AG04450 (cell line): ENCODE measurements at regions of chr1 and their contacts with region 1.

Region 1: DNA sequence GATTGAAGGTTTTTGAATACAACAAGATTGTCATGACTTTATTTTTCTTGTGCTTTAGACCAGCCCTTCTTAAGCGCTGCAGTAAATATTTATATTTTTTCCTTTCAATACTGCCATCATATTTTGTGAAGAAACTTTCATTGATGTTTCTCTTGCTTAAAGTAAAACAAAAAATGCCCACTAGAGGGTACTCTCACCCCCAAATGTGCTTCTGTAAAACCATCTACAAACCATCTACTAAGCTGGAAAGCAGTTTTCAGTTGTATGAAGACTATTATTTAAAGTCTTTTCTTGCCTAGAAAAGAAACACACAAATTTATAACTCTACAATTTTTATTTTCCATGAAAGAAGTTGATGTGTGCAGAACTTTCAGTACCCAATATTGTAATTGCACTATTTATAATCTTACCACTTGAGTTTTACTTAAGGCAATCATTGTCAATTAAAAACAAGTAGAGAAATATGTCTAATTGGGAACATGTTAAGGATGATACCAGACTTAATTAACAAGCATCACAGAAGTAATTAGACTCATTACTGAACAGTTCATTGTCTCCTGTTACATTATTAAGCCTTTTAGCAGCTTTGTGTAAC is 10.7 kb downstream of the LEPR start:
- DNase-seq: no peak
- H3K4me3 ChIP-seq: no peak overlapping the region
- H3K27ac ChIP-seq: no peak overlapping the region
- H3K27me3 ChIP-seq: no peaks in the 10 kb centered on the region
- CTCF ChIP-seq: peak; percentile 69

Region 2: GRCh38 chr1:65419681-65420589 is 11.3 kb before region 1 on chr1:
- CTCF ChIA-PET with region 1: interaction called, 14 read pairs
- POLR2A ChIA-PET with region 1: no interaction called
- DNase-seq: peak; percentile 96
- H3K4me3 ChIP-seq: peak overlapping the region; percentile 73
- H3K27ac ChIP-seq: peak overlapping the region; percentile 65
- H3K27me3 ChIP-seq: no peaks in the 10 kb centered on the region
- CTCF ChIP-seq: no peak

Region 3: DNA sequence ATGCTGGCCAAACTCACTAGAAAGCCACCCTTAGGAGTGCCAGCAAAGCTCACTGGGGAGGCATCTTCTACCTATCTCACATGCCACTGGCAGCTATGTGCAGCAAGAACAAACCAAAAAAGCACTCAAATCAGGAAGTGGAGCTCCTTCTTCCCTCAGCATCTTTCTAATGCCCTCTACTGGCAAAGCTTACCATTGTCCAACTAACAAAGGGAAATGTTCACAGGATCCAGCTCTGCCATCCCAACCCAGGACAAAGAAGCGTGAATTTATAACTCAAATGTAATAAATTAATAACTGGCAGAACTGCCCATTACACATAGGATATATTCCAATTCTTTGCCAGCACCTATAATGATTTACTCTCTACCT is 28.2 kb after region 1 on chr1:
- CTCF ChIA-PET with region 1: interaction called, 31 read pairs
- POLR2A ChIA-PET with region 1: no interaction called
- DNase-seq: no peak
- H3K4me3 ChIP-seq: no peak overlapping the region
- H3K27ac ChIP-seq: no peak overlapping the region
- H3K27me3 ChIP-seq: no peaks in the 10 kb centered on the region
- CTCF ChIP-seq: peak; percentile 49